Dorsolateral prefrontal cortex (tissue), 120 donors: ENCODE measurements at regions of chr11 and their contacts with region 1.

Region 1: GRCh38 chr11:28808771-28809170 is 700.6 kb downstream of the METTL15 start:
- DNase-seq: no peak
- H3K4me3 ChIP-seq: no peak overlapping the region
- H3K27ac ChIP-seq: no peak overlapping the region
- H3K27me3 ChIP-seq: peaks cover 0 to 4% (median 0%) of the 10 kb centered on the region in 45 donors
- CTCF ChIP-seq: no peak

Region 2: GRCh38 chr11:28195449-28195848 is 613.3 kb before region 1 on chr11:
- intact Hi-C with region 1: no loop called
- DNase-seq: no peak
- H3K4me3 ChIP-seq: no peak overlapping the region
- H3K27ac ChIP-seq: no peak overlapping the region
- H3K27me3 ChIP-seq: no peaks in the 10 kb centered on the region
- CTCF ChIP-seq: no peak

Region 3: GRCh38 chr11:28777126-28777525 is 31.6 kb before region 1 on chr11:
- intact Hi-C with region 1: no loop called
- DNase-seq: no peak
- H3K4me3 ChIP-seq: no peak overlapping the region
- H3K27ac ChIP-seq: no peak overlapping the region
- H3K27me3 ChIP-seq: no peaks in the 10 kb centered on the region
- CTCF ChIP-seq: no peak

Region 4: GRCh38 chr11:28849053-28849452 is 40.3 kb after region 1 on chr11:
- intact Hi-C with region 1: loop called in 1 of 2 experiments (anchors 2 kb)
- DNase-seq: no peak
- H3K4me3 ChIP-seq: no peak overlapping the region
- H3K27ac ChIP-seq: no peak overlapping the region
- H3K27me3 ChIP-seq: no peaks in the 10 kb centered on the region
- CTCF ChIP-seq: no peak

Region 5: DNA sequence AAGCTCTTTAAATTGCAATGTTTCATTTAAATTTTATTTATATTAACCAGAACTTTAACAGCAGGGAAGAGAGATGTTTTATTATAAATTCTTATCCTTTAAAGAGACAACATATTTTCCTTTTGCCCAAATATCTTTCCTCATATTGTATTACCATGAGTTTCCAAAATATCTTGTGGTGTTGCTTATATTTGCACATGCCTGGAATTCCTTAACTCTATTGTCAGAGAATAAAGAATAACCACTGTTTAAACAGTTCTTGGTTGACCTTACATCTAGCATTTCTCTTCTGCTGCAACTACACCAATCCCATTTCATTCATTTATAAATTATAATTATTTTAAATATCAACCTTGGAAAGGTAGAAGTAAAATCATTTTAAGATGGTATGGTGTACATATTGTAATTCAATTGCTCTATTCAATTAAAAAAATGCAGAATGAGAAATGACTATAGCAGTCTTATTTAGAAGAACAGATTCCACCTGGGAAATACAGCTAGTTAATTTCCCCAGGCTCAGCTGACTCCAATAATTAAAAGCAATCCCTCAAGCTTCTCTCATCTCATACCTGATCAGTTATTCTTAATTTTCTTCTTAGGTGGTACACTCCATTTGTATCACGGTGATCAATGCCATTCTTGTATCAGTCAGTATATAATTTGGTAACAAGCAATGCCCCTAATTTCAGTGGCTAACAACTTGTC is 284.8 kb after region 1 on chr11:
- intact Hi-C with region 1: no loop called
- DNase-seq: no peak
- H3K4me3 ChIP-seq: no peak overlapping the region
- H3K27ac ChIP-seq: no peak overlapping the region
- H3K27me3 ChIP-seq: no peaks in the 10 kb centered on the region
- CTCF ChIP-seq: no peak